OCI-LY7 (cell line): ENCODE measurements at regions of chr10 and their contacts with region 1.

Region 1: DNA sequence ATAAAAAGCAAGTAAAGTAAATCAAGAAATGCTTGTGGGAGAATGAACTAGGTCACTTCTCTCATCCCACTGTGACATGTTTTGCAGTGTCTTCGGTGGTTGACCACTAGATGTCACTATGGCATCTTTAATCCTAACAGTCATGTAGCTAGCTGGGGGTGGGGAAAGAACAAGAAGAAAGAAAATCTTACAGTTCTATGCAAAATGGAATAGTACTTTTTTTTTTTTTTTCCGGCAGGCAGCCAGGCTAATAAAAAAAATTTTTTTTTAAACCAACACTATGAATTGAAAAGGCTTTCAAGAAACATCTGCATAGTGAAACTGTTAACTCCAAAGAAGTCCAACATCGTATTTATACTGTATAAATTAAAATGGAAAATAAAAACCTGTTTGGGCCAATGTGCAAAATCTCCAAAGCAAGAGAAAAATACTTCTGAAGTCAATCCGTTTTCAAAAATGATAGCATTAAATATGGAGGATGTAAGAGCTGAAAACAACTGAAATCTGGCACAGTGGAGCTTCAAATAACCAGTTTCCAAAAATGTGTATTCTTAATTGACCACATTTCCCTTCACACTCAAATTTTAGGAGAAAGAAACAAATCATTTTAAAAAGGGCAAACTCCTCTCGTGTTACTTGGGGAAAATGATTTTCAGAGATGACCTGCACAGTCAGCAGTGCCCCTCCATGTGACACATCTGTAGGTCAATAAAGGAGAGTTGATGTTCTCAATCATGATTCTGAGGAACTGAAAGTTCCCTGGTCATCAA is 38.5 kb downstream of the CDK1 start:
- DNase-seq: peak; percentile 76
- H3K4me3 ChIP-seq: no peak overlapping the region
- H3K27ac ChIP-seq: no peak overlapping the region
- H3K4me1 ChIP-seq: no peaks in the 10 kb centered on the region
- CTCF ChIP-seq: peak; percentile 97

Region 2: GRCh38 chr10:60629332-60629731 is 187.5 kb before region 1 on chr10:
- CTCF ChIA-PET with region 1: no interaction called
- POLR2A ChIA-PET with region 1: no interaction called
- intact Hi-C with region 1: no loop called
- DNase-seq: no peak
- H3K4me3 ChIP-seq: no peak overlapping the region
- H3K27ac ChIP-seq: no peak overlapping the region
- H3K4me1 ChIP-seq: no peaks in the 10 kb centered on the region
- CTCF ChIP-seq: no peak

Region 3: GRCh38 chr10:60964257-60965235 is 147.7 kb after region 1 on chr10:
- CTCF ChIA-PET with region 1: no interaction called
- POLR2A ChIA-PET with region 1: no interaction called
- intact Hi-C with region 1: loop called (anchors 1 kb)
- DNase-seq: peak; percentile 60
- H3K4me3 ChIP-seq: no peak overlapping the region
- H3K27ac ChIP-seq: no peak overlapping the region
- H3K4me1 ChIP-seq: peaks cover 10% of the 10 kb centered on the region
- CTCF ChIP-seq: peak; percentile 91

Region 4: GRCh38 chr10:61140765-61141392 is 324.1 kb after region 1 on chr10:
- CTCF ChIA-PET with region 1: no interaction called
- POLR2A ChIA-PET with region 1: no interaction called
- intact Hi-C with region 1: loop called (anchors 10 kb)
- DNase-seq: peak; percentile 41
- H3K4me3 ChIP-seq: no peak overlapping the region
- H3K27ac ChIP-seq: no peak overlapping the region
- H3K4me1 ChIP-seq: peaks cover 4% of the 10 kb centered on the region
- CTCF ChIP-seq: peak; percentile 82

Region 5: GRCh38 chr10:61284222-61284890 is 467.5 kb after region 1 on chr10:
- CTCF ChIA-PET with region 1: no interaction called
- POLR2A ChIA-PET with region 1: no interaction called
- intact Hi-C with region 1: loop called (anchors 2 kb)
- DNase-seq: peak; percentile 56
- H3K4me3 ChIP-seq: no peak overlapping the region
- H3K27ac ChIP-seq: no peak overlapping the region
- H3K4me1 ChIP-seq: peaks cover 9% of the 10 kb centered on the region
- CTCF ChIP-seq: peak; percentile 91

Region 6: DNA sequence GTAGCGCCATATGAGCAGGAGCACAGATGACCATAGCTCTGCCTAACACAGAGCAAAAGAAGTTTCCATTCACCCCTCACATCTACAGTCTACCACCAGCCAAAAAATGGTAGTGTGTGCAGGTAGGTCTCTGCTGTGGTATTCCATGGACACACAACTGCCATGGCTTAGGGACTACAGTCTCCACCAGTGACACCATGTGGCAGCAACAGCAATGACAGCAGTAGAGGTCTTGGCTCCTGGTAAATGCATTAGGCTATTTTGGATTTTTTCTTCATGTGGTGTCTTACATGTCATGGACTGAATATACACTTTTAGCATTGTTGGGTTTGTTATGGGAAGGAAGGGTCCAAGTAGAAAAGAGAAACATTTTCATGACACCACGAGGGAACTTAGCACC is 775.8 kb after region 1 on chr10:
- CTCF ChIA-PET with region 1: no interaction called
- POLR2A ChIA-PET with region 1: no interaction called
- intact Hi-C with region 1: loop called (anchors 10 kb)
- DNase-seq: peak; percentile 21
- H3K4me3 ChIP-seq: no peak overlapping the region
- H3K27ac ChIP-seq: no peak overlapping the region
- H3K4me1 ChIP-seq: no peaks in the 10 kb centered on the region
- CTCF ChIP-seq: peak; percentile 71

Region 7: DNA sequence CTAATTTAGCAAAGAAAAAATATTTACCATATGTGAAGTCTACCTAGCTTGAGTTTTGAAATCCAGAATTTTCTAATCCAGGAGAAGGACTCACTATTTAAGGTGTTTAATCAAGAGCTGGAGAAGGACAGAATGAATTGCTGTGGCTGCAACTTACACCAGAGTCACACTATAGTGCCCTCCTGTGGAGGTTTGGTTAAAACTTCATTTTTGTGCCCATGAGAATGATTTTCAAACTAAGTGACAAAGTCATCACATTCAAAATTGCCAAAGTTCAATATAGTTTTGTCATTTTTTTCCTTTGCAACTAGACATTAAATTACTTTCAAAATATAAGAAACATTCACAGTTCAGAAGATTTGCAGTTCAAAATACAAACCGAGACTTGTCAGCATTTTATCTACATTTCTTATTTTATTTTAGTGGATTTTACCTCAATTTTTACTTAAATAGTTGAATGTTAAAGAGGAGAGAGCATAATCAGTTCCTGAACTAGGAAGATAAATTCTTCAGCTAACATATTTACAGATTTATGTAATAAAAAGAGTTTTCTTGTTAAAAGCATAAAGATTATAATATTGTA is 916.6 kb after region 1 on chr10:
- CTCF ChIA-PET with region 1: no interaction called
- POLR2A ChIA-PET with region 1: no interaction called
- intact Hi-C with region 1: loop called (anchors 10 kb)
- DNase-seq: peak; percentile 56
- H3K4me3 ChIP-seq: no peak overlapping the region
- H3K27ac ChIP-seq: no peak overlapping the region
- H3K4me1 ChIP-seq: no peaks in the 10 kb centered on the region
- CTCF ChIP-seq: peak; percentile 91